T-cell (primary cell): ENCODE measurements at regions of chr6 and their contacts with region 1.

Region 1: DNA sequence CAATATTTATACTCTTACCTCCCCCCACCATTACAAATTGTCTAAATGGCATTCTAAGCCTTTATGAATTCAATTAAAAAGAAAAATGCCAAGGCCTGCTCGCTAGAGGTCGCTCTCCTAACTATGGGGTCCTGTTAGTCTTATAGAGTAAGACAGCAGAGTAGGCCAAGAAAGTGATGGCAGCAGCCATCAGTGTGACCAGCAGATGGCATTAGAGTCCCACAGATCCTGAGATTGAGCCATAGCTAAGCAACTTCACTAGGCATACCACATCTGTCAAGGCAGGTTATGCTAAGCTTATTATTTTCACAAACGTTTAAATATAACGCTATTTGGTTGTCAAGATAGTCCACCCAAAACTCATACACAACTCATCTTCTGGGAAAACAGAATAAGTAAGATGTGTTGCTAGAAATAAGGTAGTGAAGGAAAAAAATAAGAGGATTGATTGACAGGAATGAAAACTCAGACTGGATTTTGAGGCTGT is 57.6 kb upstream of the SCAF8 start:
- DNase-seq: peak; percentile 68 to 95 (median 84)
- ATAC-seq: peak; percentile 100
- H3K4me3 ChIP-seq: no peak overlapping the region
- H3K4me3 Mint-ChIP-seq: no peak overlapping the region
- H3K27ac ChIP-seq: no peak overlapping the region
- H3K27ac Mint-ChIP-seq: no peak overlapping the region
- H3K4me1 ChIP-seq: no peaks in the 10 kb centered on the region
- H3K4me1 Mint-ChIP-seq: no peaks in the 10 kb centered on the region
- H3K27me3 ChIP-seq: no peaks in the 10 kb centered on the region
- H3K27me3 Mint-ChIP-seq: no peaks in the 10 kb centered on the region

Region 2: DNA sequence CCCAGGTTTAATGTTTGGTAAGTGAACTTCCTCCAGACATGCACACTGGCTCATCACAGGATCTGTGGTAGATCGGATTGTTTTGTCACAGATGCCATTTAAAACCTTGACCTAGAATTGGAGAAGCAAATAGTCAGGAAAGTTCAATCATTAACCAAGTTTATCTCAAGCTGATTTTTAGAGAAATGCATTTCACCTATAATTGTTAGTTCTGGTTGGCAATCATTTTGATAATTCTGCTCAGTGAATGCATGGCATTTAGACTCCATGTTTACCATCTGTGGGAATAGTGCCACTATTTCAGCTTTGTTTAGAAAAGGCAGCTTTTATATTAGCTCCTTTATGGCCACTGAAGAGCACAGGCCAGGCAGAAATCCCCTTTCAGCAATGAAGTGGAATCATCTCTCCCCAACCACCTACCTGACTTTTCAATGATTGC is 245.1 kb before region 1 on chr6:
- CTCF ChIA-PET with region 1: interaction called in 1 of 2 experiments, 10 read pairs
- POLR2A ChIA-PET with region 1: no interaction called
- DNase-seq: no peak
- ATAC-seq: no peak
- H3K4me3 ChIP-seq: no peak overlapping the region
- H3K4me3 Mint-ChIP-seq: no peak overlapping the region
- H3K27ac ChIP-seq: no peak overlapping the region
- H3K27ac Mint-ChIP-seq: no peak overlapping the region
- H3K4me1 ChIP-seq: no peaks in the 10 kb centered on the region
- H3K4me1 Mint-ChIP-seq: no peaks in the 10 kb centered on the region
- H3K27me3 ChIP-seq: peaks cover 0 to 3% of the 10 kb centered on the region in 2 experiments
- H3K27me3 Mint-ChIP-seq: no peaks in the 10 kb centered on the region

Region 3: DNA sequence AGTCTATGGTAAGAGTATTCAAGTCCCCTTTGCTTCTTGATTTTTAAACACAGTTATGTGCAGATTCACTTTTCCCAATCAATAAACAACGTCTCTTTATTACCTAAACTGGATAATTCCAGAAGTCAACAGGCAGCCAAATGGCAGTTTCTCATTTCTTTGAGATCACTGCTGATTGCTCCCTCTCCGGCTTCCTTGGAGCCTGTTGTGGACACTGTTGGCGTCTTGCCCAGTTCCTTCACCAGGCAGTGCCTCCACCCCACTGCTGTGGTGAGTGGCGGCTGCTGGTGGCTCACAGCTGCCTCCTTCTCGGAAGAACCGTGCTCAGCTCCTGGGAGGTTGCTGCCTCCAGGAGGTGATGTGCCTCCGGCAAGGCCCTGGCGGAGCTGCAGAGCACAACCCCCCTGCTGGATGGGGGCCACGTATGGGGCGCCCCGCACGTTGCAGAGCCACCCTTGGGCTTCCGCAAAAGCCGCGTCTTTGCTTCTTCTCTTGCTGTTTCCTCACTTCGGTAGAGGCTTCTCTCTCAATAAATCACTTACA is 60.1 kb before region 1 on chr6:
- CTCF ChIA-PET with region 1: no interaction called
- POLR2A ChIA-PET with region 1: no interaction called
- DNase-seq: no peak
- ATAC-seq: no peak
- H3K4me3 ChIP-seq: no peak overlapping the region
- H3K4me3 Mint-ChIP-seq: no peak overlapping the region
- H3K27ac ChIP-seq: no peak overlapping the region
- H3K27ac Mint-ChIP-seq: no peak overlapping the region
- H3K4me1 ChIP-seq: no peaks in the 10 kb centered on the region
- H3K4me1 Mint-ChIP-seq: peaks cover 0 to 5% (median 3%) of the 10 kb centered on the region in 3 donors
- H3K27me3 ChIP-seq: no peaks in the 10 kb centered on the region
- H3K27me3 Mint-ChIP-seq: peaks cover 0 to 7% of the 10 kb centered on the region in 2 donors

Region 4: DNA sequence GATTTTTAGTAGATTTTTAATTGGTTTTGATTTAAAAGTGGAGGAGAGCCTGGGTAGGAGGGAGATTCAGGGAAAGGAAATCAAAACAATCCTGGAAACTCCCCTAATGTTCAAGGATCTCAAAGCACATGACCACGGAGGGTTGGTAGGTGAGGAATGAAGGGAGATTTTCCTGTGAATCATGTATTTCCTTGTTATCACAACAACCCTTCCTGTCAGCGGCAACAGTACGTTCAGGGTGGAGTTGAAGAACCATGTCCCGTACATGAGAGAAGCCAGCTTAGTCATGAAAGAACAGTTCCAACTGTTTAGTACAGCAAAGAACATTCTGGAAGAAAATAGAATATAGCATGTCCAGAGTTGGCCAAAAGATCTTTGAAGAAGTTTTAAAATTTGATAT is 21.8 kb before region 1 on chr6:
- CTCF ChIA-PET with region 1: no interaction called
- POLR2A ChIA-PET with region 1: no interaction called
- DNase-seq: no peak
- ATAC-seq: no peak
- H3K4me3 ChIP-seq: no peak overlapping the region
- H3K4me3 Mint-ChIP-seq: no peak overlapping the region
- H3K27ac ChIP-seq: no peak overlapping the region
- H3K27ac Mint-ChIP-seq: no peak overlapping the region
- H3K4me1 ChIP-seq: no peaks in the 10 kb centered on the region
- H3K4me1 Mint-ChIP-seq: no peaks in the 10 kb centered on the region
- H3K27me3 ChIP-seq: no peaks in the 10 kb centered on the region
- H3K27me3 Mint-ChIP-seq: peaks cover 3% of the 10 kb centered on the region in 2 donors

Region 5: GRCh38 chr6:154800338-154800737 is 124.7 kb after region 1 on chr6:
- CTCF ChIA-PET with region 1: interaction called, 74 to 224 read pairs
- POLR2A ChIA-PET with region 1: no interaction called
- DNase-seq: peak in 1 of 35 experiments; percentile 39
- ATAC-seq: peak in 1 of 4 experiments; percentile 55
- H3K4me3 ChIP-seq: no peak overlapping the region
- H3K4me3 Mint-ChIP-seq: no peak overlapping the region
- H3K27ac ChIP-seq: no peak overlapping the region
- H3K27ac Mint-ChIP-seq: peak overlapping the region; percentile 51 to 70
- H3K4me1 ChIP-seq: peaks cover 0 to 6% of the 10 kb centered on the region in 2 experiments
- H3K4me1 Mint-ChIP-seq: peaks cover 17 to 34% (median 20%) of the 10 kb centered on the region in 3 donors
- H3K27me3 ChIP-seq: no peaks in the 10 kb centered on the region
- H3K27me3 Mint-ChIP-seq: no peaks in the 10 kb centered on the region

Region 6: DNA sequence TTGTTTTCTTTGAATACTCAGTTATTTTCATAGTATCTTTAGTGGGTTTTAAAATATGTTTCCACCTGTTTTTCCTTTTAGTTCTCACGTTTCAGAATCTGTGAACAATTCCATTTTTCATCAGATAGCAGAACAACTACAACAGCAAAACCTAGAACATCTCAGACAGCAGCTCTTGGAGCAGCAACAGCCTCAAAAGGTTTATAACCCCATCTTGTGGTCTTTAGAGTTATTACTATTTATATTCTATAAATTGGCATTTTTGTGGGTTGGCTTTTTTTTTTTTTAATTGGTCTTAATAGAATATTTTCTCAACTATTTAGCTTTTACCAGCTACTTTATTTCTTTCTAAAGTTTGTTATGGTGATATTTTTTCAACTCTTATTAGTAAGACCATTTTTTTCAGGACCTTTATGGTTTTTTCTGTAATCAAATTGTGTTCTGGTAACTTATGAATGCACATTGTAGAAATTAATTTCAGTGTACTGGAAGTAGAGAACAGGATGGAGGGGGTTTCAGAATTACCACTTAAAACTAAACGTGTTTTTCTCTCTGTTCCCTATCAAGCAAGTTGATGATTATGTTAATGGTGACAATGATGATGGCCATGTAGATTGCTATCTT is 129.8 kb after region 1 on chr6:
- CTCF ChIA-PET with region 1: interaction called, 74 to 224 read pairs
- POLR2A ChIA-PET with region 1: no interaction called
- DNase-seq: peak in 3 of 35 experiments; percentile 3 to 63 (median 3)
- ATAC-seq: peak in 3 of 4 experiments; percentile 45 to 66 (median 62)
- H3K4me3 ChIP-seq: no peak overlapping the region
- H3K4me3 Mint-ChIP-seq: no peak overlapping the region
- H3K27ac ChIP-seq: no peak overlapping the region
- H3K27ac Mint-ChIP-seq: no peak overlapping the region
- H3K4me1 ChIP-seq: no peaks in the 10 kb centered on the region
- H3K4me1 Mint-ChIP-seq: peaks cover 0 to 2% (median 1%) of the 10 kb centered on the region in 3 donors
- H3K27me3 ChIP-seq: no peaks in the 10 kb centered on the region
- H3K27me3 Mint-ChIP-seq: no peaks in the 10 kb centered on the region

Region 7: DNA sequence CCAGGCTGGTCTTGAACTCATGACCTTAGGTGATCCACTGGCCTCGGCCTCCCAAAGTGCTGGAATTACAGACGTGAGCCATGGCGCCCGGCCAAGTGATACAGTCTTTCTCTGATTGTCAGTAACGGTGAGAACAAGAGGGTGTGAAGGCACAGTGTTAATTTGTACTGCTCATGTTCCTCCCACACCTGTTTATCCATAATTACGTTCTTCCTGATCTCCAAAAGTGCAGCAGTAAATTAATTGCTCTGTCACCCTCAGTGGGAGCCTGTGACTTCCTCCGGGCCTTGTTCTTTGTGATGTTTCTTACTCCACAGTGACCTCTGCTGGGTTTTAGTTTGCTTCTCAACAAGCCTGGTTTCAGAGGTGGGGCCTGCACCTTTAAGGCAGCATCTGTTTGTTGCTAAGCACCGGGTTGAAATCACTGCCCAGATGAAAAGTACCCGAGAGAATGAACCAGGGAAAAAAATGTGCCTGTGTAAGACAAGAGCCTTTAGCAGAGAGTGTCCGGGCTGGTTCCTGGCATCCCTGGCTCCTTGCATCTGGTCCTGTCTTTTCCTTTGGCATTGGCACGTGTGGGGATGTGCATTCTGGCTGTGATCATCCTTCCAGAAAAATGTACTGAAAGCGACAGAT is 499.0 kb after region 1 on chr6:
- CTCF ChIA-PET with region 1: interaction called in 1 of 2 experiments, 24 read pairs
- POLR2A ChIA-PET with region 1: interaction called in 1 of 2 experiments, 4 read pairs
- DNase-seq: peak; percentile 2 to 82 (median 40)
- ATAC-seq: peak; percentile 50 to 72 (median 65)
- H3K4me3 ChIP-seq: no peak overlapping the region
- H3K4me3 Mint-ChIP-seq: no peak overlapping the region
- H3K27ac ChIP-seq: no peak overlapping the region
- H3K27ac Mint-ChIP-seq: peak overlapping the region in 1 of 2 donors; percentile 16
- H3K4me1 ChIP-seq: peaks cover 0 to 10% of the 10 kb centered on the region in 2 experiments
- H3K4me1 Mint-ChIP-seq: peaks cover 19 to 36% (median 29%) of the 10 kb centered on the region in 3 donors
- H3K27me3 ChIP-seq: no peaks in the 10 kb centered on the region
- H3K27me3 Mint-ChIP-seq: no peaks in the 10 kb centered on the region